ENCODE measurements at regions of chr10 and their contacts with region 1.

Region 1: DNA sequence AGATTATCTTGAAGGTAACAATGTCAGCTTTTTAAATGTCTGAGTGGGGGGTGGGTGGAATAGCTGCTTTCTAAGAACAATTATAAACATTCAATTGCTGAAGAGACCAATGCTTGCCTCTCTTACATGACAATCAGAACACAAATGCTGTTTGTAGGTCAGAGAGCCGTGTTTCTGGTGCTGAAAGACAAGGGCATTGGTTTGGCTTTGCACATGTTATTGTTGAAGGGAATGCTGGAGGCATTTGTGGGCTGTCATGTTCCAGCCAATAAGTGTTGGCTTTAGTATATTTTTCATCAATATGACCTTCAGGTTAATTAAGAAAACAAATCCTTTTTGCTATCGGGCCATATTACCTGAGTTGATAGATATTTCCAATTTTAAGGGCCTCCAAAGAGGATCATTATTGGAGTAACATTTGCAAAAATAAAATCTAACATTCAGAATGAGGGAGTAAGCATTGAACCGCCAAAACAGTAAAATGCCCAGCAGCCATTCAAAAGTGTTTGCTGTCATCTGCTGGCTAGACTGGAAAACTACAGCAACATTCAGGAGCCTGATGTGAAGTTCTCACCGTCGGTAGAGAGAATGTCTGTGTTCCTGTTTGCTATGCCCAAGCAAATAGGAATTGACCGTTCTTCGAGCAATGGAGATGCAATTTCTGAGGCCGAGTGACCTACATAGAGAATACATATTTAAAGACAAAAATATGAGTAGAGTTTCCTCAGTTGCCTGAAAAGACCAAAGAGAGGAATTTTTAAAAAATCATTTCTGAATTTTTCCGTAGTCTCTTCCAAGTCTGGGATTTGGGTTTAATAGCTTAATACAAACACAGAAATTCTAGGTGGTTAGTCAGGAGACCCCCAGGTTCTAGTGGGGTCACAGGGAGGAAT is 118.9 kb downstream of the APBB1IP start:
- H3K4me3 Mint-ChIP-seq: no peak overlapping the region
- H3K27ac Mint-ChIP-seq: no peak overlapping the region
- H3K4me1 Mint-ChIP-seq: peaks cover 43% of the 10 kb centered on the region
- H3K27me3 Mint-ChIP-seq: no peaks in the 10 kb centered on the region

Region 2: GRCh38 chr10:25875556-25876165 is 681.3 kb before region 1 on chr10:
- intact Hi-C with region 1: loop called (anchors 2 kb)
- H3K4me3 Mint-ChIP-seq: no peak overlapping the region
- H3K27ac Mint-ChIP-seq: no peak overlapping the region
- H3K4me1 Mint-ChIP-seq: no peaks in the 10 kb centered on the region
- H3K27me3 Mint-ChIP-seq: peaks cover 1% of the 10 kb centered on the region

Region 3: DNA sequence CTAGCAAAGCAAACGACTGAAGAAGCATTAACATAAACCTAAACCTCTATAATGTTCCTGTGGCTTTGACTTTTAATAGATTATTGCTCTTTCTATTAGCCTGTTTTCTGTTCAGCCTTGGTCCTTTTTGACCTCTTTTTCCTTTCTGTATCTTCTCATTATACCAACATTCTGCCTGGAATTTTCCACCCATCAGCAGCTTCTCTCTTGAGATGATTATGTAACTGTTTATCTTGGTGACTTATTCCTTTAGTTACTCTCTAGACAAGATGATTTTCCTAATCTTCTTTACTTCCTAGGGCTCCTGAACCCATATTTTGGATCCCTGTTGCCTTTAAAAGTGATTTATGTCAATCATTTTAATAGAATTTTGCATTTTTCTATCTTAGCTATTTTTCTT is 541.9 kb before region 1 on chr10:
- intact Hi-C with region 1: no loop called
- H3K4me3 Mint-ChIP-seq: no peak overlapping the region
- H3K27ac Mint-ChIP-seq: no peak overlapping the region
- H3K4me1 Mint-ChIP-seq: no peaks in the 10 kb centered on the region
- H3K27me3 Mint-ChIP-seq: no peaks in the 10 kb centered on the region

Region 4: DNA sequence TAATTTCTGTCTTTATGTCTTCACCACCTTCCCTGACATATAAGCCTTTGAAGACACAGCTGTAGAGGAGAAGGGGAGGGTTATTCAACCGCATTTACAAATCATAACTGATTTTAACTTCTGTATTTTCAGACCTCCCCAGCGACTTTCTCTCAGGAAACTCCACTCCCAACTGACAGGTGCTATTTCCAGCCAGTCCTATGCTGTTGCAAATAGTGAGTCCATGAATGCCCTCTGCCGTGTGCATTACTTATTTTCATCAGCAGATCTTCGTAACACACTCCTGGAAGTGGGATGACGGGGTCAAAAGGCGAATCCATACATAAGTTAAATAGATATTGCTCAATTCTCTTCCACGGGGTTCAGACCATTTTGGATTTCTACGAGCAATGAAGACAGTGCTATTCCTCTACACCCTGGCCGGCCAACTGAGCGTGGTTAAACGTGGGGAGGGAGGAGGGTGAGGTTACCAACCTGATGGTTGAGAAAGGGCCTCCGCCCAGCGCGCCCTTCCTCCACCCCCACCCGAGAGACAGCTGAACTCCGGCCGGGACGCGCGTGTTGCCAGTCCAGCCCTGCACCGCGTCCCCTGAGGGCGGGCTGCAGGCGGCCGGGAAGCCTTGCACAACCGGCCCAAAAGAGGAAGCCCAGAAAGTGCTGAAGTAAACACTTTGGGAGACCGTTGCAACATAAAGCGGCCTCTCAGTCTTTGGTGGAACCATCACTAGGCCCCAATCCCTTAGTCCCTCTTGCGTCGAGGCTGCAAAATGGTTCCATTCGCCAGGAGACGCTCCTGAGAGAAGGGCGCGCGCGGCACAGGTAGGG is 119.1 kb before region 1 on chr10 and contains the start of gene APBB1IP:
- intact Hi-C with region 1: loop called (anchors 5 kb)
- H3K4me3 Mint-ChIP-seq: peak within 1 kb of the TSS; percentile 94
- H3K27ac Mint-ChIP-seq: peak within 1 kb of the TSS; percentile 97
- H3K4me1 Mint-ChIP-seq: peaks cover 53% of the 10 kb centered on the region
- H3K27me3 Mint-ChIP-seq: no peaks in the 10 kb centered on the region

Region 5: GRCh38 chr10:26770069-26770468 is 213.1 kb after region 1 on chr10:
- intact Hi-C with region 1: no loop called
- H3K4me3 Mint-ChIP-seq: no peak overlapping the region
- H3K27ac Mint-ChIP-seq: no peak overlapping the region
- H3K4me1 Mint-ChIP-seq: no peaks in the 10 kb centered on the region
- H3K27me3 Mint-ChIP-seq: no peaks in the 10 kb centered on the region